Right ventricle myocardium superior (tissue), 1 donor: ENCODE measurements at regions of chr3 and their contacts with region 1.

Region 1: DNA sequence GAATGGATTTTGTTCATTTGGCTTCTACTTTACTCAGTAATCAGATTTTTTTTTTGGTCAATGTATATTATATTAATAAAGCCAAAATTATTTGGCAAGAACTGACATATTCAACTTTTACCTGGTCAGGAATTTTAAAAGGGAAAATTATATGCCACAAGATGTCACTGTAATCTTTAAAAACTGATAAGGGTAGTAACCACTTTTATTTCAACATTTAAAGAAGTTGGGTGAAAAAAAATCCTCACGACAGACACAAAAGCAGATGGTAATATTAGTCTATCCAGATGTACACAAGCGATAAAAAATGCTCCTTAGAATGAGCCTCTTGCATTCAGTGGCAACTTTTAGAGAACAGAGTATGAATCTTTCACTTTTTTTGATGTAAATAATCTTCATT is 101.9 kb downstream of the SERPINI1 start:
- DNase-seq: no peak
- ATAC-seq: no peak

Region 2: GRCh38 chr3:167783781-167784180 is 53.7 kb before region 1 on chr3:
- intact Hi-C with region 1: no loop called
- DNase-seq: peak; percentile 46
- ATAC-seq: peak; percentile 57

Region 3: DNA sequence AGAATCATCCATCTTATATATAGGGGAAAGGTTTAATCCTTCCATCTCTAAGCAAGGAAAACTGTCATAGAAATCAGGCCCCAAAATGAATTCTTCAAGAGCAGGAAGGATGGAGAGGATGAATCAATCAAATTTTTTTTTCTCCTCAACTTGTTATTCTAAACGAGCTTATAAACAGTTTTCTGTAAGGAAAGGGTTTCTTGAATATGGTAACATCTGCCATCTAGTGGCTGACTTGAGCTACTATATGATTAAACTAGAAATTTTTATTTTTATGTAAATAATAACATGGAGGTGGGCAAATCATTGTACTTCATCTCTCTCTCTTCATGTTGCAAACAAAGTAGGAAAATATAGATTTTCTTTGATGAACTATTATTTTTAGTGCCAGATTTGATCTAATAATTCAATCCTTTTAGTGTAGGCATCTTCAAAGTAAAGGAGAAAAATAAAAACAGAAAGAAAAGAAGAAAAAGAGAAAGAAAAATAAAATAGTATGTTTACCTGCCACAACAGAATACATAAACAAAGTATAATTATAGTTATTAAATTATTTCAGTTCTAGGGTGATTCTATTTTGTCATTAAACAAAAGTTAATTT is 44.7 kb after region 1 on chr3:
- intact Hi-C with region 1: loop called (anchors 5 kb)
- DNase-seq: no peak
- ATAC-seq: no peak